ENCODE measurements at regions of chr18 and their contacts with region 1.

Region 1: DNA sequence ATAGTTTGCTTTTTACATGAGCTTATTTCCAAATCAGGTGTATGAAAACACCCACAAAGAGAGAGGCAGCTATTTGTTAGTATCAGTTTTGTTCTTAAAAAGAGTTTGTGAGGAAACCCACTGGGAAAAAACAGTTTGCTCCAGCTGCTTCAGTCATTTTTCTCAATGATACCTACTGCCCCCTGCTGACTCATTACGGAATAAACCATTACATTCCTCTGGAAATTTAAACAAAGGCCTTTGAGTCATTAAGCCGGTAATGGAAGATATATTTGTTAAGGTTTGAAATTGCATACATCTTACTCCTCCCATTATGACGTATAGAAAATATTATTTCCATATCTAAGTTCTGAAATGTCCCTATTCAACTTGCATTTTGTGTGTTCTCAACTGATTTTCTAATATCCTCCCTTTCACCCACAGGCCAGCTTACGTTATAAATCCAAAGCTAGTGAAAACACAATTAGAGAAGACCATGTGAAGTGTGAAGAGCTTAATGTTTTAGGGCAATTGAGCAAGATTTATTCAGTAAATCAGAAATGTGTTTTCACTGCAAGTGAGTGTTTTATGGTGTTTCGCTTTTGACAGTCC is 761.6 kb downstream of the DSC3 start:
- DNase-seq: peak; percentile 38
- ATAC-seq: no peak
- H3K4me3 ChIP-seq: no peak overlapping the region
- H3K27ac ChIP-seq: no peak overlapping the region
- H3K4me1 ChIP-seq: no peaks in the 10 kb centered on the region
- H3K27me3 ChIP-seq: no peaks in the 10 kb centered on the region
- CTCF ChIP-seq: peak; percentile 59; the same call in 1 of the 2 replicates

Region 2: DNA sequence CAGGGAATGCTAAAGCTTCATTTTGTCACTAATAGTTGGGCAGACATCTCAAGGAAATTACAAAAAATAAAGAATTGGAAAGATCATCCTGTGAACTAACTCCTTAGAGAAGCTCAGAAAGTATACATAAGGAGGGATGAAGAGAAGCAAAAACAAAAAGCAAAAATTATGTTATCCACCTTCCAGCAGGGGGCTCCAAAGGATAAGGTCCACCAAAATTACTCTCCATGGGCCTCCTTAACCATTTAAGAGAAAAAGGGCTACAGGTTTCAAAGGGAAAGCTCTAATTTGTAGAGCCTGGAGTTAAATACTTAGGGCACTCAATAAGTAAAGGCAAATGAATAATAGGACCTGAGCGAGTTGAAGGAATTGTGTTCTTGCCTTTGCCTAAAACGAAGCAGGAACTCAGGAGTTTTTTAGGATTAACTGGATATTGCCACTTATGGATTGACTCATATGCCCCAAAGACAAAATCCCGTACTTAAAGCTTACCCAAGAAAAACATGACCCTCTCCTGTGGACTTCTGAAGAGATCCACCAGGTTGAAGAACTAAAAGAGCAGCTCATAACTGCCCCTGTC is 406.4 kb before region 1 on chr18:
- CTCF ChIA-PET with region 1: interaction called, 3 read pairs
- POLR2A ChIA-PET with region 1: no interaction called
- in situ Hi-C with region 1: no loop called
- intact Hi-C with region 1: loop called (anchors 10 kb)
- DNase-seq: peak; percentile 2
- ATAC-seq: no peak
- H3K4me3 ChIP-seq: no peak overlapping the region
- H3K27ac ChIP-seq: no peak overlapping the region
- H3K4me1 ChIP-seq: no peaks in the 10 kb centered on the region
- H3K27me3 ChIP-seq: no peaks in the 10 kb centered on the region
- CTCF ChIP-seq: peak; percentile 41; the same call in 1 of the 2 replicates

Measured in Panc1 (cell line).